ENCODE measurements at regions of chr9 and their contacts with region 1.

Region 1: DNA sequence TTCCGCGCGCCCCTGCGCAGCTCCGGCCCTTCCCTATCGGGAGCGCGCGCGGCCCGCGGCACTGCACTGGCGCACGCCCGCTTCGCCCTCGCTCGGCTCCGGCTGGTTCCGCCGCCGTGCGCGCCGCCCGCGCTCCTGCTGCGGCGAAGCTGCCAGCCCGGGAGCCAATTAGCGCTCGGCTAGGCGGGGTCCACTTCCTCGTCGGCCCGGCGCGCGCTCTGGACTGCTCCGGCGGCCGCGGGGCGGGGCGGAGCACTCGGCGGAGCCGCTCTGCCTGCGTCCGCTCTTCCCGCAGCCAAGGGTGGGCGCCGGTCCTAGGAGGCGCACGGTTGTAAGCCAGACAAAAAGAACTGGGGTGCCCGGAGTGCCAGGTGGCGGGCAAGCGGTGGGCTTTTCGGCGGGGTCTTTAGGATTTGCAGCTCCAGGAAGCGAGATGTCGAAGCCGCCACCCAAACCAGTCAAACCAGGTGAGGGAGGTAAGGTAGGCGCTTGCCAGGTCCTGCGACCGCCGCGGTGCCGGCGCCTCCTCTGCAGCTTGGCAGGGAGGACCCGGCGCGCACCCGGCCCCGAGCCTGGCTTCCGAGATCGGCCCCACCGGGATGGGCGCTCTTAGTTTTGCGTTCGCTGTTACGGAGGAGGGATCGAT is at the start of gene OSTF1:
- DNase-seq: peak; percentile 97
- H3K4me3 ChIP-seq: peak within 1 kb of the TSS; percentile 82 to 88 (median 84)
- H3K27ac ChIP-seq: peak within 1 kb of the TSS; percentile 98 to 100 (median 100)
- H3K4me1 ChIP-seq: peaks cover 6 to 54% (median 35%) of the 10 kb centered on the region in 4 donors
- H3K27me3 ChIP-seq: no peaks in the 10 kb centered on the region
- CTCF ChIP-seq: no peak
- EP300 ChIP-seq: no peak
- POLR2A ChIP-seq: peak; percentile 98
- total RNA-seq, gene OSTF1: 0.60 to 37.8 (median 19.0) TPM

Region 2: GRCh38 chr9:74952281-74953151 is 135.9 kb before region 1 on chr9 and contains the start of gene C9orf40:
- in situ Hi-C with region 1: no loop called
- intact Hi-C with region 1: loop called (anchors 5 kb)
- DNase-seq: peak; percentile 94
- H3K4me3 ChIP-seq: peak within 1 kb of the TSS; percentile 85 to 98 (median 94)
- H3K27ac ChIP-seq: peak within 1 kb of the TSS; percentile 96 to 99 (median 98)
- H3K4me1 ChIP-seq: peaks cover 0 to 16% (median 3%) of the 10 kb centered on the region in 4 donors
- H3K27me3 ChIP-seq: no peaks in the 10 kb centered on the region
- CTCF ChIP-seq: peak; percentile 71 to 92 (median 84)
- EP300 ChIP-seq: no peak
- POLR2A ChIP-seq: peak; percentile 57
- total RNA-seq, gene C9orf40: 4.2 to 12.3 (median 10.6) TPM in 3 of 4 donors, not detected in the other

Measured in transverse colon (tissue), 4 donors.